Activated B cell treated with CpG ODN at 0.5 μM for 24 hours (primary cell): ENCODE measurements at regions of chr7 and their contacts with region 1.

Region 1: GRCh38 chr7:7103343-7104313 is 78.7 kb upstream of the C1GALT1 start:
- DNase-seq: no peak
- ATAC-seq: peak; percentile 71
- H3K4me3 Mint-ChIP-seq: no peak overlapping the region
- H3K27ac Mint-ChIP-seq: no peak overlapping the region
- H3K4me1 Mint-ChIP-seq: peaks cover 4% of the 10 kb centered on the region
- H3K27me3 Mint-ChIP-seq: no peaks in the 10 kb centered on the region
- CTCF ChIP-seq: no peak

Region 2: DNA sequence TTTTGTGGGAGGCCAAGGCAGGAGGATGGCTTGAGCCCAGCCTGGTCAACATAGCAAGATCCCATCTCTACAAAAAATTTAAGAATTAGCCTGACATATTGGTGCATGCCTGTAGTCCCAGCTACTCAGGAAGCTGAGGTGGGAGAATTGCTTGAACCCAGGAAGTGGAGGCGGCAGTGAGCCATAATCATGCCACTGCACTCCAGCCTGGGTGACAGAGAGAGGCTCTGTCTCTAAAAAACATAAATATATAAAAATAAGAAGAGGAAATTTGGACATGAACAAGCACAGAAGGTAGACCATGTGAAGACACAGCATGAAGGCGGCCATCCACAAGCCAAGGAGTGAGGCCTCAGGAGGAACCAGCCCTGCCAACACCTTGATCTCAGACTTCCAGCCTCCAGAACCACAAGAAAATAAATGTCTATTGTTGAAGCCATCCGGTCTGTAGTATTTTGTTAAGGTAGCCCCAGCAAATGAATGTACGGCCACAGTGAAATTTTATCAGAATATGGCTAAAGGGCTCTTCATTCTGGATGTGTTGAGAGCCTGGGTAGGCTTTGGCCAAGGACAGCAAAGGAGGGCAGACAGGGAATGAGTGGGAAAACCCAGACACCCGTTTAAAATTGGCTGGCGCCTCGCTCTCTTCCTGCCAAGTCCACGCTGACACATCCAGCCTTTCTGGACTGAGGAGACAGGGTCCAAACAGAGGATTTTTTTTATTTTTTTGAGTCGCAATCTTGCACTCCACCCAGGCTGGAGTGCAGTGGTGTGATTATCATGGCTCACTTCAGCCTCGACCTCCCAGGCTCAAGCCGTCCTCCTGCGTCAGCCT is 539.5 kb before region 1 on chr7:
- CTCF ChIA-PET with region 1: no interaction called
- POLR2A ChIA-PET with region 1: no interaction called
- intact Hi-C with region 1: no loop called
- DNase-seq: no peak
- ATAC-seq: no peak
- H3K4me3 Mint-ChIP-seq: no peak overlapping the region
- H3K27ac Mint-ChIP-seq: no peak overlapping the region
- H3K4me1 Mint-ChIP-seq: no peaks in the 10 kb centered on the region
- H3K27me3 Mint-ChIP-seq: peaks cover 1% of the 10 kb centered on the region
- CTCF ChIP-seq: no peak

Region 3: DNA sequence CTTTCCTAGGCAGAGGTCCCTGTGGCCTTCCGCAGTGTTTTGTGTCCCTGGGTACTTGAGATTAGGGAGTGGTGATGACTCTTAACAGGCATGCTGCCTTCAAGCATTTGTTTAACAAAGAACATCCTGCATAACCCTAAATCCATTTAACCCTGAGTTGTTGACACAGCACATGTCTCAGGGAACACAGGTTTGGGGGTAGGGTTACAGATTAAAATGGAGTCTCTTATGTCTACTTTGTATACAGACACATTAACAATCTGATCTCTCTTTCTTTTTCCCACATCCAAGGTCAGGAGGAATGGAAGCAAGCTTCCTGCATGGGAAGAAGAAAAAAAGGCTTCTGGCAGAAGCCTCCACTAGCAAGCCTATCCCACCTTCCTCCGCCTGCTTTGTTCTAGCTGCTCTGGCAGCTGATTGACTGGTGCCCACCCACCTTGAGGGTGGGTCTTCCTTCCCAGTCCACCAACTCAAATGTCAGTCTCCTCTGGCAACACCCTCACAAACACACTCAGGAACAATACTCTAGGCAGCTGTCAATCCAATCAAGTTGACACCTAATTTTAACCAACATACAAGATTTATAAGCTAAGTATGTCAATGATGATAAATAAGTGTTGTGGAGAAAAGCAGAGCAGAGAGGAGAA is 101.1 kb before region 1 on chr7:
- CTCF ChIA-PET with region 1: no interaction called
- POLR2A ChIA-PET with region 1: no interaction called
- intact Hi-C with region 1: no loop called
- DNase-seq: no peak
- ATAC-seq: no peak
- H3K4me3 Mint-ChIP-seq: no peak overlapping the region
- H3K27ac Mint-ChIP-seq: no peak overlapping the region
- H3K4me1 Mint-ChIP-seq: no peaks in the 10 kb centered on the region
- H3K27me3 Mint-ChIP-seq: peaks cover 20% of the 10 kb centered on the region
- CTCF ChIP-seq: no peak

Region 4: DNA sequence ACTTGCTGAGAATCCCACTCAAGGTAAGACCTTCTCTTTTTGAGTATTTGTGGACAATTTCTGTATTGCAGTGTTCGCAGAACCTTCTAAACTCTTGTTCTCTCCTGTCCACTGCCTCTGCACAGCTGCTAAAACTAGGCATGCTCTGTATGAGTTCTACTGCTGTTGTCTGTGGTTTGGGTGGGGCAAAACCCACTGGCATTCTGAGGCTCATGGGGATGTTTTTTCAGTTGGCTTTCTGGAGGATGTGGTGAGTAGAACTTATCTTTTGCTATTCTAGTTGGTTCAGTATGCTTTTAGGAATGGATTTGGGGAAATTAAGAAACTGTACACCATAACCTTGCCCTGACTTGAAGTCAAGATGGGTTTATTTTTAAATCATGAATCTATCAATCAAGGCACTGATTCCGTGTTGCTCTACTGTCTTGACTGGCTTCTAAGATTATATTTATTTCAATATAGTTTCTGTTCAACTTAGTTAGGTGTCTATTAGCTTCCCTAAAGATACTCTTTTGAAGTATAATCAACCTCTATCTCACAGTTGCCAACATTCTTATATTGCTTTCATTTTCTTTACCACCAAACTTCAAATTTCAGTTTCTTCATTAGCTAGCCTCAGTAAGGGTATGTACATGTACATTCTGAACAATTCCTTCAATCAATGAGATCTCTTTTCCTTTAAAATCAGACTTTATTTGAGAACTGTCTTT is 53.7 kb after region 1 on chr7:
- CTCF ChIA-PET with region 1: interaction called, 7 read pairs
- POLR2A ChIA-PET with region 1: no interaction called
- intact Hi-C with region 1: loop called (anchors 2 kb)
- DNase-seq: no peak
- ATAC-seq: peak; percentile 86
- H3K4me3 Mint-ChIP-seq: peak overlapping the region; percentile 88
- H3K27ac Mint-ChIP-seq: peak overlapping the region; percentile 95
- H3K4me1 Mint-ChIP-seq: peaks cover 56% of the 10 kb centered on the region
- H3K27me3 Mint-ChIP-seq: no peaks in the 10 kb centered on the region
- CTCF ChIP-seq: no peak

Region 5: DNA sequence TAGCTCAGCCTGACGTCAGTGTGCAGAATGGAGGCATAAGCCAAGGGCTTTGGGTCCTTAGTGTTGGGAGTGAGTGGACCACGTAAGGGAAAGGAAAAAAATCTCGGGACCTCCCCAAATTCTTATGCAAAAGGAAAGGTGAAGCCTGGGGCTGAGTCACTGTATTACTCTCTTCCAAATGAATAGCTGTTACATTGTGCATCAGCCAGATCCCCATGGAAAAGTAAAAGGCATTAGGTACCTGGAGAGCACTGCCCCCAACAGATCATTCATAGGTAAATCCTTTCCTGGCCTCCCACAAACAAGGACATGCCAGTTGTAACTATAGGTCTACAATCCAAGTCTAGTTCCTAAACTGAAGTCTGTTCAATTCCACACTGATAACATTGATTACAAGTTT is 249.2 kb after region 1 on chr7:
- CTCF ChIA-PET with region 1: no interaction called
- POLR2A ChIA-PET with region 1: no interaction called
- intact Hi-C with region 1: loop called (anchors 1 kb)
- DNase-seq: no peak
- ATAC-seq: no peak
- H3K4me3 Mint-ChIP-seq: no peak overlapping the region
- H3K27ac Mint-ChIP-seq: no peak overlapping the region
- H3K4me1 Mint-ChIP-seq: no peaks in the 10 kb centered on the region
- H3K27me3 Mint-ChIP-seq: peaks cover 13% of the 10 kb centered on the region
- CTCF ChIP-seq: no peak

Region 6: GRCh38 chr7:7542251-7542835 is 438.7 kb after region 1 on chr7:
- CTCF ChIA-PET with region 1: interaction called, 44 read pairs
- POLR2A ChIA-PET with region 1: no interaction called
- intact Hi-C with region 1: loop called (anchors 2 kb)
- DNase-seq: no peak
- ATAC-seq: no peak
- H3K4me3 Mint-ChIP-seq: no peak overlapping the region
- H3K27ac Mint-ChIP-seq: no peak overlapping the region
- H3K4me1 Mint-ChIP-seq: peaks cover 2% of the 10 kb centered on the region
- H3K27me3 Mint-ChIP-seq: peaks cover 6% of the 10 kb centered on the region
- CTCF ChIP-seq: no peak

Region 7: DNA sequence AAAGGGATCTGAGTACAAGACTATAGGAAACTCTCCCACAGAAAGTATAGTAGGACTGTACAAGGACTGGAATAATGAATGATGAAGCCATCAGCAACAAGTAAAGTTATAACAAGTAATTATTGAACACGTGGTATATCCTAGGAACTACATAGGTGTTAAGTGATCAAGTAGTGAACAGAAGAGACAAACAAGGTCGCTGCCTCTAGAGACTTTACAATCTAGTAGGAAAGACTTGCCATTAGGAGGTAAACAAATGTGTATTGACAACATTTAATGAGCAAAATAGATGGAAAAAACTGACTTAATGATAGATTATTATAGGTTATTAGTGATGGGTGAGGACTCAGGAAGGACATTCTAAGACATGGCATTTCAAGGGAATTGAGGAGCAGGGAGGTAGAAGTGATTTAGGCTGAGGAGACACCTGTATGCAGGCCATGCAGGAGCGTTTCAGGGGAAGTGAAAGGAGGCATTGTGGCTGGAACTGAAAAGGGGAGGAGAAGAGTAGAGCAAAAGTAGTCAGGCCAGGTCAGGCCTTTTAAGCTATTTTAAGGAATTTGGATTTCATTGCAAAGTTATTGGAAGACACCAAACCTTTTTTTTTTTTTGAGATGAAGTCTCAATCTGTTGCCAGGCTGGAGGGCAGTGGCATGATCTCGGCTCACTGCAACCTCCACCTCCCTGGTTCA is 856.5 kb after region 1 on chr7:
- CTCF ChIA-PET with region 1: no interaction called
- POLR2A ChIA-PET with region 1: no interaction called
- intact Hi-C with region 1: no loop called
- DNase-seq: no peak
- ATAC-seq: no peak
- H3K4me3 Mint-ChIP-seq: no peak overlapping the region
- H3K27ac Mint-ChIP-seq: no peak overlapping the region
- H3K4me1 Mint-ChIP-seq: peaks cover 12% of the 10 kb centered on the region
- H3K27me3 Mint-ChIP-seq: no peaks in the 10 kb centered on the region
- CTCF ChIP-seq: no peak

Region 8: DNA sequence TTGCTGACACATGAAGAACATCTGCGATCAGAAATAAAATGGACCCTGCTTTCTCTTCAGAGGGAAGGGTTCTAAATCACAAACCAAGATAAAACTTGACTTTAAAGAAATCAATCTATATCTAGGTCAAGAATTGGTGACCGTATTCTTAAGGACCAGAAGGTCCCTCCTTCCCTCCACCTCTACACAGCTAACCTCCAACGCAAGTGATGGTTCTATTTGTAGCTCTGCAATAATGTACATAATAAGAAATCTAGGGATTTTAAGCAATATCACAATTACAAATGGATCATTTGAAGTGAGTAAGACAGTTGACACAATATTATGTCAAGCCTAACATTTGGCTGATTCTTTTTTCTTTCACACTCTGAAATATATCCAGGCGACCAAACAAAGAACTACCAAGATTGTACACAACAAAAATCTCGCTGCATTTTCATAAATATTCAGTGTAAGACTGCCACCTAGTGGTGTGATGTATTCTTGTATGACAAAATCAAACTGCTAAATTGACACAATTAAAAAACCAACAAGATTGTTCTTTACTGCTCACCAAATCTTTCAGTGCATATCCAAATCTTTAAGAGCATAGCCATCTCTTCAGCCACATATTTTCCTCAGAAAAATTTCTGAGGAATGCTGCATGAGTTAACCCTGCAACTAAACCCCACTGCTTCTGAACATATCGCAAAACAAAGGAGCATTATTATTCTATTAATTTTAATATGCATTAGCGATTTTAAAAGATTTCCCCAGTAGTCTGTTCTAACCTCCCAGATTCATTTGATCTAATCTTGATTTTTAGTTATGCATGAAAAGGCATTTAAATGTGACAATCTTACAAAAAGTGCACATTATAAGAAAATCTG is 1113.8 kb after region 1 on chr7:
- CTCF ChIA-PET with region 1: interaction called, 3 read pairs
- POLR2A ChIA-PET with region 1: no interaction called
- intact Hi-C with region 1: loop called (anchors 1 kb)
- DNase-seq: no peak
- ATAC-seq: no peak
- H3K4me3 Mint-ChIP-seq: no peak overlapping the region
- H3K27ac Mint-ChIP-seq: no peak overlapping the region
- H3K4me1 Mint-ChIP-seq: no peaks in the 10 kb centered on the region
- H3K27me3 Mint-ChIP-seq: no peaks in the 10 kb centered on the region
- CTCF ChIP-seq: no peak